OCI-LY7 (cell line): ENCODE measurements at regions of chr3 and their contacts with region 1.

Region 1: DNA sequence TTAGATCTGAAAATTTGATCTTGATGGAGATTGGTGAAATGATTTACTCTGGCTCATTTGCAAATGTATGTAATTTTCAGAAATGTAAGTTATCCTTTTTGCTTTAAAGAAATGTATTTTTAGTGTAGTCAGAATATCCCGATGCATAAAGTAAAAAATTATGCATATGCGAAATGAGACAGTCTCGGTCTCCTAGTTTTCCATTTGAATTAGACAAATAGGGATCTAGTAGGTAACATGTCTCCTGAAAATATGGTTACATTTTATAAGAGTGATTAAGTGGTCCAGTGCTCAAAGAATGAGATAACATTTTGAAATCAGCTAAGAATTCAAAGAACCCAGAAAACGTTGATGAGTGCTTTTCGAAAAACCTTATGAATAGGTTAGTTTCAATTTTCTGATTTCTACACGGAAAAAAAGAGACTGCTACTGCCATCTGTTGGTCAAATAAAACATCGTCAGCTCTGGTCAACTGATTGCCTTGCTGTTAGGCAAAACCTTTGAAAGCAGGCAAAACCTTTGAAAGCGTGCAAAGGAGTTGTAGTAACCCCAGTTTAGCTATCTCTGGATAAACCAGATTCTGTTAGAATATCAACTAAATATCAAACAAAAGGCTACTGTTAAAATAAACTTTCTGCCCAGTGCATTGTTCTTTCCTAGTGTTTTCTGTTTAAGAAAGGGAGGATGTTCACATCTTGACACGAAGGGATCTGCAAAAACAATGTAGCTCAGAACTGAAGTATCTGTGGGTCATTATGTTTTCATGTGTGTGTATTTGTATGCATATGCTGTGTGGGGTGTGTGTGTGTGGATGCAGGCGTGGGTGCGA is 59.3 kb upstream of the CHMP2B start:
- DNase-seq: peak; percentile 46
- H3K4me3 ChIP-seq: no peak overlapping the region
- H3K27ac ChIP-seq: no peak overlapping the region
- H3K4me1 ChIP-seq: no peaks in the 10 kb centered on the region
- CTCF ChIP-seq: peak; percentile 89

Region 2: DNA sequence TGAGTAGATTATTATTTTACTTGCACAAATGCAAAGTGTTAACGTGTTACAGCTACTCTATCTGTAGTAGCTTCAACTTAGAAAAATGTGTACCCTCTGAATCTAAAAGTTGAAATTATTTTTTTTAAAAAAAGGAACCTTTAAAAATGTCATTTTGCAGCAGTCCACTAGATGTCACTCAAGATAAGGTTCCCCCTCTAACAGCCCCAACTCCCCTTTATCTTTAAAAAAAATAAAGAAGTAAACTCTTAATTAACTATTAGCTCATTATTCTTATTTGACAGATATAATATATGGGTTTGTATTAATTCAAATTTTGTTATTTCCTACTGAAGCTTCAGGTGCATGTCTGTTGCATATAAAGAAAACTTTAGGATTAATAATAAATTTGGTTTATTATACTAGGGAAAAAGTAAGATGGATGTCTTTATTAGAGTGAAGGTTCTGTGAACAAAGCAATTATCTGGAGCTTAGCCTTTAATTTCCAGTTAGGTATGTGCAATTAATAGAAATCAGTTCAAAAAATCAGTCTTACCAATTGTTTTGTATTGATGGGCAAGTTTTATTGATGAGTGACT is 465.4 kb before region 1 on chr3:
- CTCF ChIA-PET with region 1: no interaction called
- POLR2A ChIA-PET with region 1: no interaction called
- intact Hi-C with region 1: loop called (anchors 10 kb)
- DNase-seq: peak; percentile 4
- H3K4me3 ChIP-seq: no peak overlapping the region
- H3K27ac ChIP-seq: no peak overlapping the region
- H3K4me1 ChIP-seq: no peaks in the 10 kb centered on the region
- CTCF ChIP-seq: peak; percentile 83

Region 3: GRCh38 chr3:86774082-86774691 is 393.7 kb before region 1 on chr3:
- CTCF ChIA-PET with region 1: no interaction called
- POLR2A ChIA-PET with region 1: no interaction called
- intact Hi-C with region 1: loop called (anchors 1 kb)
- DNase-seq: peak; percentile 36
- H3K4me3 ChIP-seq: no peak overlapping the region
- H3K27ac ChIP-seq: no peak overlapping the region
- H3K4me1 ChIP-seq: no peaks in the 10 kb centered on the region
- CTCF ChIP-seq: peak; percentile 80

Region 4: DNA sequence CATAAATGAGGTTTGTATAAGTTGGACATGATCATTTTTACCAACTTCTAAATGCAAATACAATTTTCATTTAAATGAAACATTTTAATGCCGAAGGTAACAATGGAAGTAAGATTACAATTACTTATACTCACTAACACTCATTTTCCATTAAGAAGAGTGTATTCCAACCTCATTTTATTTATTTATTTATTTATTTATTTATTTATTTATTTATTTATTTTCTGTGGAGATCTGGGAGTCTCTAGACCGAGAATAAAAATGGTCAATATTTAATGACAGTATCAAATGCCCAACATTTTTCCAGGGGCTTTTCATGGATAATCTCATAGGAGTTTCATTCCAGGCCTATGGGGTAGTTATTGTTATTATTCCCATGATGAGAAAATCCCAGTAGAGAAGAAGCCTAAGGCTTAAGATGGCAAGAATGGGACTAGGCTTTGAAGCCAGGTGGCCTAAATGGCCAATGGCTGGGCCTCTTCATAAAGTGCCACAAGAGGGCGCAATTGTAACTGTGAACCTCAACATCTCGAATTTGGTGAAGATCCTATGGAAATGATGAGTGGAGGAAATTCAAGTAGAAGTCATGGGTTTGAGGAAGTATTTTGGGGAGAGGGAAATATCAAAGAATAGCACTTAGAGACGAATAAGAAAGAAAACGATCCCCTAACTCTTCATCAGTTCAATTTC is 198.2 kb before region 1 on chr3:
- CTCF ChIA-PET with region 1: no interaction called
- POLR2A ChIA-PET with region 1: no interaction called
- intact Hi-C with region 1: loop called (anchors 5 kb)
- DNase-seq: peak; percentile 54
- H3K4me3 ChIP-seq: no peak overlapping the region
- H3K27ac ChIP-seq: no peak overlapping the region
- H3K4me1 ChIP-seq: no peaks in the 10 kb centered on the region
- CTCF ChIP-seq: peak; percentile 92